RWPE1 (cell line): ENCODE measurements at regions of chr1 and their contacts with region 1.

Region 1: GRCh38 chr1:174032671-174033222 is 10.6 kb upstream of the RC3H1 start:
- DNase-seq: no peak
- H3K27ac ChIP-seq: no peak overlapping the region
- CTCF ChIP-seq: no peak

Region 2: GRCh38 chr1:173868266-173869020 is 164.3 kb before region 1 on chr1 and contains the start of gene ZBTB37:
- CTCF ChIA-PET with region 1: no interaction called
- POLR2A ChIA-PET with region 1: interaction called, 10 read pairs
- DNase-seq: peak; percentile 88
- H3K27ac ChIP-seq: peak within 1 kb of the TSS; percentile 95
- CTCF ChIP-seq: no peak

Region 3: DNA sequence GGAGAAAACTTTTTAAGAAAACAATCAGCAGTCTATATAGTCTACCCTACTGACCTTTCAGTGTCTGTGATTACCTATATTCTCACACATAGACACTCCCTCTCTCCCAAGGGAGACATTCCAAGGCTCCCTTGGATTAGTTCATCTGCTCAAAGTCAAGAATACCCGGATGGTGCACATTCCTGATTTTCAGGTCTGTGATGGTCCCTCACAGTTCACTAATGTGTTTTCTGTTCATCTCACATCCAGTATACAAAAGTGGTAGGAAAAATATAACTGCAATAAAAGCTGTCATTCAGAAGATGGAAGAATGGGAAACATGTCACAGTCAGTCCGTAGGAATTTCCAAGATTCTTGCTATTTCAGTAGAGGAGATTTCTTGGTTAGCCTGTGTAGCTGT is 742.9 kb after region 1 on chr1:
- CTCF ChIA-PET with region 1: no interaction called
- POLR2A ChIA-PET with region 1: no interaction called
- DNase-seq: no peak
- H3K27ac ChIP-seq: no peak overlapping the region
- CTCF ChIP-seq: no peak